ENCODE measurements at regions of chr3 and their contacts with region 1.

Region 1: GRCh38 chr3:15859507-15860013 is 61.8 kb upstream of the ANKRD28 start:
- DNase-seq: peak; percentile 83 to 90 (median 86)
- ATAC-seq: peak; percentile 95 to 97 (median 97)
- H3K4me3 ChIP-seq: peak overlapping the region; percentile 76 to 98 (median 90)
- H3K27ac ChIP-seq: peak overlapping the region in 11 of 12 donors; percentile 38 to 78 (median 70)
- H3K4me1 ChIP-seq: peaks cover 0 to 22% (median 9%) of the 10 kb centered on the region in 12 donors
- H3K27me3 ChIP-seq: peaks cover 0 to 2% (median 0%) of the 10 kb centered on the region in 9 donors
- CTCF ChIP-seq: no peak
- POLR2A ChIP-seq: peak in 1 of 2 donors; percentile 52

Region 2: DNA sequence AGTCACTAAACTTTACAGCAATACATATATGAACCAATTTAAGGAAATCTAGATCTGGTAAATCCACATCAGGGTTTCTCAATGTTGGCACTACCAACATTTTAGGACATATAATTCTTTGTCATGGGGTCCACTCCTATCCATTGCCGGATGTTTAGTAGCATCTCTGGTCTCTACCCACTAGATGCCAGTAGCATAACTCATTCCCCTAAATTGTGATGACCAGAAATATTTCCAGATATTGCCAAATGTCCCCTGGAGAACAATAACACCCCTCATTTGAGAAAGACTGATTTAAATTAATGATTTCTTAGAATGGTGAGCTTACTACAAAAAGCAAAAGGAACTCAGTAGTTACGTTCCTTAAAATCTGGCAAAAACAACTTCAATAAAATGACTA is 38.6 kb before region 1 on chr3:
- intact Hi-C with region 1: loop called in 1 of 10 experiments (anchors 5 kb)
- DNase-seq: no peak
- ATAC-seq: no peak
- H3K4me3 ChIP-seq: no peak overlapping the region
- H3K27ac ChIP-seq: no peak overlapping the region
- H3K4me1 ChIP-seq: peaks cover 0 to 21% (median 6%) of the 10 kb centered on the region in 12 donors
- H3K27me3 ChIP-seq: no peaks in the 10 kb centered on the region
- CTCF ChIP-seq: no peak
- POLR2A ChIP-seq: no peak

Region 3: DNA sequence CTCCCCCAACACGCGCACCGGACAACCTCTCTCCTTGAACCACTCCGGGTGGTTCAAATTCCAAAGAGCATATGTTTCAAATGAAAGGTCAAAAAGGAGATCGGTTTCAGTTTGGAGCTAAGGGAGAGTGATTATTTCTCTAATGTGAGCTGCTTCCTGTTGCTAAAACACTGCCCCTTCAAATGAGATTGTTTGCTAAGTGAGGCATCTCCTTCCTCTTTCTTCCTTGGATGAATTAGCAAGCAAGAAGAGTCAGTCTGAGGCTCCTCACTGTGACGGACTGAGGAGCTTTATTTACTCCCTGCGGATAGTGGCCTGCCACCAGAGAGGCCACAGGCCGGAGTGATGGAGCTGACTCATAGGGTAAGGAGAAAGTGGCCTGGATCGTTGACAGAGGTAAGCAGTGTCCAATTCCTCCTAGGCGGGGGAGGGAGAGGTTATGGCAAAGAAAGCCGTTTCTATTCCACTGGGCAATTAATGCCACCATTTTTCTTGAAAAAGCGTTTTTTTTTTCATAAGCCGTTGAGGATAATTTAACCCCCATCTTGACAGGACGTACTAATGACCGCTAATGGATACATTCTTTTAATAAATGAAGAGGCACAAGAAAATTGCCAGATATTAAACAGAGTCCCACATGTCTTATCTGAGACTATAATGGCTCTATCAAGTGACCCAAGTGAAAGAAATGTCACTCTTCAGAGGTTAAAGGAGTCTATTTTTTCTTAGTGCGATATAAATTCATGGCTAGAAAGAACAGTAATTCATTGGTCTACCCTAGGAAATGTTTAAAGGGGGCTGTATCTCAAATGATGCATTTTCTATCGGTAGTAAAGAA is 105.3 kb after region 1 on chr3:
- intact Hi-C with region 1: loop called in 2 of 10 experiments (anchors 10 kb)
- DNase-seq: peak in 1 of 5 donors; percentile 28
- ATAC-seq: peak in 3 of 4 donors; percentile 28 to 56 (median 56)
- H3K4me3 ChIP-seq: no peak overlapping the region
- H3K27ac ChIP-seq: peak overlapping the region in 5 of 12 donors; percentile 4 to 64 (median 17)
- H3K4me1 ChIP-seq: peaks cover 0 to 9% (median 0%) of the 10 kb centered on the region in 12 donors
- H3K27me3 ChIP-seq: no peaks in the 10 kb centered on the region
- CTCF ChIP-seq: no peak
- POLR2A ChIP-seq: no peak

Region 4: GRCh38 chr3:15974647-15975046 is 115.1 kb after region 1 on chr3:
- intact Hi-C with region 1: loop called in 2 of 10 experiments (anchors 10 kb)
- DNase-seq: no peak
- ATAC-seq: no peak
- H3K4me3 ChIP-seq: no peak overlapping the region
- H3K27ac ChIP-seq: no peak overlapping the region
- H3K4me1 ChIP-seq: no peaks in the 10 kb centered on the region
- H3K27me3 ChIP-seq: no peaks in the 10 kb centered on the region
- CTCF ChIP-seq: peak in 3 of 12 donors; percentile 5 to 29 (median 8)
- POLR2A ChIP-seq: no peak

Region 5: GRCh38 chr3:16370872-16371740 is 511.5 kb after region 1 on chr3:
- intact Hi-C with region 1: no loop called
- DNase-seq: peak in 2 of 5 donors; percentile 45 to 57
- ATAC-seq: peak; percentile 17 to 53 (median 48)
- H3K4me3 ChIP-seq: no peak overlapping the region
- H3K27ac ChIP-seq: peak overlapping the region in 11 of 12 donors; percentile 50 to 78 (median 70)
- H3K4me1 ChIP-seq: peaks cover 27 to 91% (median 67%) of the 10 kb centered on the region in 12 donors
- H3K27me3 ChIP-seq: no peaks in the 10 kb centered on the region
- CTCF ChIP-seq: no peak
- POLR2A ChIP-seq: no peak

Measured in heart left ventricle (tissue), 16 donors.